ENCODE measurements at regions of chr5 and their contacts with region 1.

Region 1: DNA sequence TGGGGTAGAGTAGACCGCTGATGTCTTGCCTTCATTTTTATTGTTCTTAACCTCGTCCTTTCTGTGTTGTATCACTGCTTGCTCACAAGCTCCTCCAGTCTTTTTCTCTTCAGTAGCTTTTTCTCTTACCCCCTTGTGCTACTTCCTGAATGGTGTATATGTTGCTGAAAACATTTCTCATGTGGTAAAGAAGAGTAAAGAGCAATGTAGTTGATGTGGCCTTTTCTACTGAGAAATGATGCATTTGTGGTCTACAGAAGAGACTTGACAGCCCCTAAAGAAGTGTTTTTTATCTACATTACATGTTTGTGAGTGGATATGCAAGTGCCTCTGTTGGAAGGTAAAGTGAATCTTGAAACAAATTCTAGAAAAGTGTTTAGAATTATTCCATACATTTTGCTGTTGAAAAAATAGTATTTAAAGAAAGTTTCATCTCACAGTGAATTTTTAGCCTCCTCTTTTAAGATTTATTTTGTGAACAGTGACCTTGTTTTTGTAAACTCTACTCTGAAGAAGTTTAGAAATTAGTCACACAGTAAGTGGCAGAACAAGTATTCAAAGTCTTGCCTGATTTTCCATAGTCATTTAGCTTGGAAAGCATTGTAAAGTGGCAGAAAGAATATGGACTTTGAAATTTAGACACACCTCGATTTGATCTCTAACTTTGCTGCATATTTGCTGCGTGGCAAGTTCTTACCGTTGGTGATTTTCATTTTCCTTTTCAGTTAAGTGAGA is 17.4 kb downstream of the CDC42SE2 start:
- DNase-seq: no peak
- H3K4me3 Mint-ChIP-seq: peak overlapping the region; percentile 66
- H3K27ac Mint-ChIP-seq: peak overlapping the region; percentile 93
- H3K4me1 Mint-ChIP-seq: peaks cover 92% of the 10 kb centered on the region
- H3K27me3 Mint-ChIP-seq: no peaks in the 10 kb centered on the region

Region 2: DNA sequence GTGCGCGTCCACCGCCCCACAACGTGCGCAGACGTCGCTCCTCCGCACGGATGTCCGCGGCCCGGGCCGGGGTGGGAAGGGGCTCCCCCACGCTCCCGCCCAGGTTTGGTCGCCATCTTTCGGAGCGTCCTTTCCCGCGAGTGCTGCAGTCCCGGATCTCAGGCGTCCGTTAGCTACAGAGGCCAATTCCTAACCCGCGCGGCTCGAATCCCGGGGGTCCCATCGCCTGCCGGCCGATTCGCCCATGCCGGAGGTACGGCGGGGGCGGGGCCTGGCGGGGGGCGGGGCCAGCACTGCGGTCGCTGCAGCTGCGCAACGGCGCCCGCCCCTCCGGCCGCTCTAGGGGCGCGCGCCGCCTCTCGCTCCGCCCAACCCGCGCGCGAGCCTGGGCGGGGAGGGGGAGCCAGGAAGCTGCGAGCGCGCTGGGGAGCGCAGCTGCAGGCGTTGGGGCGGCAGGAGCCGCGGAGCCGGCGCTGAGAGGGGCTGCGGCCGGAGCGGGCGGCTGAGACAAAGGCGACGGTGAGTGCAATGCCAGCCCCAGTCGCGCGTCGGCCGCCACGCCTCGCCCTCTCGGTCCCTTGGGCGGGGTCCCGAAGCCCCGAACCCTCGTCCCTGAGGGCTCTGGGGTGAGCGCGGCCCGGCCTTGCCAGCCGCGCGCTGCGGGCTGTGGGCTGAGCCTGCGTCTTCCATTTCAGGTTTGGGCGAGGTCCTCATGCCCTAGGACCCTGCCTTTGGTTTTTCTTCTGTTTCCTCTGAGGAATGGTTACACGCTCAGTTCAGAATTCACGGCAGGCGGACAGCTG is 17.5 kb before region 1 on chr5 and contains the start of gene CDC42SE2:
- CTCF ChIA-PET with region 1: interaction called, 17 read pairs
- intact Hi-C with region 1: loop called (anchors 1 kb)
- DNase-seq: peak; percentile 81
- H3K4me3 Mint-ChIP-seq: peak within 1 kb of the TSS; percentile 75
- H3K27ac Mint-ChIP-seq: peak within 1 kb of the TSS; percentile 93
- H3K4me1 Mint-ChIP-seq: peaks cover 48% of the 10 kb centered on the region
- H3K27me3 Mint-ChIP-seq: no peaks in the 10 kb centered on the region
- total RNA-seq, gene CDC42SE2: 106 to 108 TPM

Region 3: DNA sequence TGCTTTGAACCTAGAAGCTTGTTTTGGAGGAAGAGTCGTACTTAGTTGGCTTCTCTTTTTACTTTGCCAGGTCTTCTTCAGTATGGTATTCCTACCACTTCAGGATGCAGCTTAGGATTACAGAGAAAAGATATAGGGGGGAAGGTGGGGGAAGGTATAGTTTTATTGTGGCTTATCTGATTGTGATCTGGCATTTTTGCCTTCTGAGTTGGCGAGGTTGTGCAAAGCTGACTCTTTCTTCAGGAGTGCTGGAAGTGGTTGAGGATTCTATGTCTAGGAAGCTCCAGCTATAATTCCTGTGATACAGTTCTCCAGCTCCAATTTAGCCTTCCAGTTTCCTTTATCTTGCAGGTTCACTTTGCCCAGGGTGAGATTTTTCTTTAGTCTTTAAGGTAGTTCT is 10.5 kb before region 1 on chr5:
- CTCF ChIA-PET with region 1: interaction called, 17 read pairs
- intact Hi-C with region 1: loop called (anchors 1 kb)
- DNase-seq: no peak
- H3K4me3 Mint-ChIP-seq: peak overlapping the region; percentile 50
- H3K27ac Mint-ChIP-seq: peak overlapping the region; percentile 97
- H3K4me1 Mint-ChIP-seq: peaks cover 75% of the 10 kb centered on the region
- H3K27me3 Mint-ChIP-seq: no peaks in the 10 kb centered on the region

Region 4: GRCh38 chr5:131328536-131329285 is 47.4 kb after region 1 on chr5:
- CTCF ChIA-PET with region 1: no interaction called
- intact Hi-C with region 1: loop called (anchors 2 kb)
- DNase-seq: no peak
- H3K4me3 Mint-ChIP-seq: no peak overlapping the region
- H3K27ac Mint-ChIP-seq: peak overlapping the region; percentile 64
- H3K4me1 Mint-ChIP-seq: peaks cover 64% of the 10 kb centered on the region
- H3K27me3 Mint-ChIP-seq: no peaks in the 10 kb centered on the region

Region 5: DNA sequence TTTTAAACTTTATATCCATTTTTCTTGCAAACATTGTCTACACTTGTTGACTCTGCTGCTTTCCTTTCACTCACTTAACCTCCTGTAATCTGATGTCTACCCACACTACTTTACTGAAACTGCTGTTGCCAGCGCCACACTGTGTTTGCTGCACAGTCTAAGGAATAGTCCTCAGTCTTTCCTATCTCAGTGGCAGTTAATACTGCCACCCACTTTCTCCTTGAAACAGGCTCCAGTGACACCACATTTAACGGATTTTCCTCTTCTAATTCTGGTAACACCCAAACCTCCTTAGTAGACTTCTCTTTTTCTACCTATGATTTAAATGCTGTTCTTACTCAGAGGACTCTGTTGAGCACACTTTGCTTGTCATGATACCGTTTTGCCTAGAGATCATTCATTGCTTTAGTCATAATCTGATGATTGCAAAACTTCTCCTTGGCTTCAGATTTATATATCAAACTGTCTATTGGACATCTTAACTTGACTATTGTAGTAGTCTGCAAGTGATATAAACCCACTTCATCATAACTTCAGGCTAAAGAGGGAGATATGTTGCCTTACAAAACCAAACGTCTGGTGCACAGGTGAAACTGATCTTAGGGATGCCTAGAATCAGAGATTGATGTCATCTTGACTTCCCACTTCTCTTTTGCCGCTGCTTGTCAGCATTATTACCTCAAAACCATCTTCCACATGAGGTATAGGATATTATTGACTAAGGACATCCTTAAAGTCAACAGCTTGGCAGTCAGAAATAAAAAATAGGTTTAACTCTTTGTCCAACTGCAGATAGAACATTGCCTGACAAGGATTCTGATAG is 76.7 kb after region 1 on chr5:
- CTCF ChIA-PET with region 1: interaction called, 4 read pairs
- intact Hi-C with region 1: loop called (anchors 1 kb)
- DNase-seq: peak; percentile 67
- H3K4me3 Mint-ChIP-seq: peak overlapping the region; percentile 54
- H3K27ac Mint-ChIP-seq: peak overlapping the region; percentile 91
- H3K4me1 Mint-ChIP-seq: peaks cover 67% of the 10 kb centered on the region
- H3K27me3 Mint-ChIP-seq: no peaks in the 10 kb centered on the region

Region 6: GRCh38 chr5:132094393-132095076 is 813.2 kb after region 1 on chr5:
- CTCF ChIA-PET with region 1: no interaction called
- intact Hi-C with region 1: loop called (anchors 10 kb)
- DNase-seq: peak; percentile 37
- H3K4me3 Mint-ChIP-seq: no peak overlapping the region
- H3K27ac Mint-ChIP-seq: no peak overlapping the region
- H3K4me1 Mint-ChIP-seq: peaks cover 33% of the 10 kb centered on the region
- H3K27me3 Mint-ChIP-seq: peaks cover 4% of the 10 kb centered on the region

Measured in activated naive CD4-positive, alpha-beta T cell treated with anti-CD3 and anti-CD28 coated beads for 36 hours (primary cell).